Right ventricle myocardium inferior (tissue), 1 donor: ENCODE measurements at regions of chr10 and their contacts with region 1.

Region 1: DNA sequence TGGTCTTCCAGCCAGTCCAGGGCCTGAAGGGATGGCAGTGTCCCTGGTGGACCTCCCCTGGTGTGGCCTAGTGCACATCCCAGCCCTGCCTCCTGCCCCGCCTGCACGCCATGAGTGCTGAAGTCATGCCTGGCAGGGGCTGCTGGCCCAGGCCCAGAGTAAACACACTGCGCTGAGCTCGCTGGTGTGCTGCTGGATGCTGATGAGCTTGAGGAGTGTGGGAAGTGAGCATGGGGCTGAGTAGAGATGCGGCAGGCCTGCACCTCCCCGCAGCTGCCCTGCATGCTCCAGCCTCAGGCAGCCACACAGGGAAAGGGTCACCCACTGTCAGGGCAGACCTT is 43.2 kb downstream of the HTRA1 start:
- DNase-seq: peak; percentile 94
- ATAC-seq: peak; percentile 97

Region 2: DNA sequence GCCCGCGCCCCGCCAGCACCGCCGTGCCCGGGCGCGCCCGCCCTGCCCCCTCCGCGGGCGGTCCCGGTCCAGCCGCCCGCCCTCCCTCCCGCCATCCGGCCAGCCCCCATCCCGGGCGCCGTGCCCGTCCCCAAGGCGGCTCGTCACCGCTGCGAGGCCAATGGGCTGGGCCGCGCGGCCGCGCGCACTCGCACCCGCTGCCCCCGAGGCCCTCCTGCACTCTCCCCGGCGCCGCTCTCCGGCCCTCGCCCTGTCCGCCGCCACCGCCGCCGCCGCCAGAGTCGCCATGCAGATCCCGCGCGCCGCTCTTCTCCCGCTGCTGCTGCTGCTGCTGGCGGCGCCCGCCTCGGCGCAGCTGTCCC is 43.2 kb before region 1 on chr10 and contains the start of gene HTRA1:
- intact Hi-C with region 1: loop called (anchors 2 kb)
- DNase-seq: peak; percentile 91
- ATAC-seq: peak; percentile 83
- total RNA-seq, gene HTRA1: 41.6 TPM

Region 3: DNA sequence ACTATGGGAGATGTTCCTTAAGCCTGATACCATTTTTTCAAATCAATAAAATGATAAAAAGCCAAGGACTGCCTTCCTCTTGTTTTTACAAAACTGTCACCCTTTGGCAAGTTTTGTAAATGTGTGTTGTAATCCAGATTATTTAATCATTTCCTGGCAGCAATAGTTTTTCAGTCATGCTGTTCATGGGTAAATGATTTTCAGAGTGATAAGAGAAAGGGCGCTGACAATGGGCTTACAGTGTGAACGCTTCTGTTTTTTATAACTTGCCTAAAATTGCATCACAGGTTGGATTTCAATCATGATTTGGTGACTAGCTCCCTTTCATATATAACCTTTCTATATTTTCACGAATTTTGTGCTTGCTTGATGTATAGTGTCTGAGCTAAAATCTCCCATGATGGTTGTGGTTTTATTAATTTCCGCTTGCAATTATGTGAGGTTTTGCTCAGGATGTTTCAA is 37.0 kb after region 1 on chr10:
- intact Hi-C with region 1: no loop called
- DNase-seq: no peak
- ATAC-seq: no peak